Gastrocnemius medialis (tissue), 4 donors: ENCODE measurements at regions of chr15 and their contacts with region 1.

Region 1: GRCh38 chr15:31499953-31500765 is 173.5 kb downstream of the KLF13 start:
- DNase-seq: no peak
- ATAC-seq: no peak
- H3K4me3 ChIP-seq: no peak overlapping the region
- H3K27ac ChIP-seq: peak overlapping the region in 2 of 4 donors; percentile 18 to 28
- H3K4me1 ChIP-seq: no peaks in the 10 kb centered on the region
- H3K27me3 ChIP-seq: no peaks in the 10 kb centered on the region
- CTCF ChIP-seq: no peak
- POLR2A ChIP-seq: no peak

Region 2: GRCh38 chr15:31200735-31201151 is 299.4 kb before region 1 on chr15:
- in situ Hi-C with region 1: loop called in 1 of 4 experiments (anchors 5 kb)
- intact Hi-C with region 1: no loop called
- DNase-seq: peak; percentile 70
- ATAC-seq: peak; percentile 92 to 95
- H3K4me3 ChIP-seq: no peak overlapping the region
- H3K27ac ChIP-seq: no peak overlapping the region
- H3K4me1 ChIP-seq: no peaks in the 10 kb centered on the region
- H3K27me3 ChIP-seq: no peaks in the 10 kb centered on the region
- CTCF ChIP-seq: peak; percentile 27 to 65 (median 55)
- POLR2A ChIP-seq: no peak

Region 3: GRCh38 chr15:31985607-31986006 is 485.4 kb after region 1 on chr15:
- in situ Hi-C with region 1: no loop called
- intact Hi-C with region 1: no loop called
- DNase-seq: no peak
- ATAC-seq: no peak
- H3K4me3 ChIP-seq: no peak overlapping the region
- H3K27ac ChIP-seq: no peak overlapping the region
- H3K4me1 ChIP-seq: no peaks in the 10 kb centered on the region
- H3K27me3 ChIP-seq: no peaks in the 10 kb centered on the region
- CTCF ChIP-seq: no peak
- POLR2A ChIP-seq: no peak